Panc1 (cell line): ENCODE measurements at regions of chrX and their contacts with region 1.

Region 1: GRCh38 chrX:41397219-41397618 is 49.9 kb upstream of the NYX start:
- DNase-seq: no peak
- ATAC-seq: no peak
- H3K4me3 ChIP-seq: no peak overlapping the region
- H3K27ac ChIP-seq: no peak overlapping the region
- H3K4me1 ChIP-seq: no peaks in the 10 kb centered on the region
- H3K27me3 ChIP-seq: no peaks in the 10 kb centered on the region
- CTCF ChIP-seq: no peak

Region 2: GRCh38 chrX:41022579-41022978 is 374.6 kb before region 1 on chrX:
- CTCF ChIA-PET with region 1: interaction called, 12 read pairs
- POLR2A ChIA-PET with region 1: no interaction called
- in situ Hi-C with region 1: no loop called
- intact Hi-C with region 1: no loop called
- DNase-seq: no peak
- ATAC-seq: no peak
- H3K4me3 ChIP-seq: no peak overlapping the region
- H3K27ac ChIP-seq: no peak overlapping the region
- H3K4me1 ChIP-seq: no peaks in the 10 kb centered on the region
- H3K27me3 ChIP-seq: no peaks in the 10 kb centered on the region
- CTCF ChIP-seq: no peak

Region 3: DNA sequence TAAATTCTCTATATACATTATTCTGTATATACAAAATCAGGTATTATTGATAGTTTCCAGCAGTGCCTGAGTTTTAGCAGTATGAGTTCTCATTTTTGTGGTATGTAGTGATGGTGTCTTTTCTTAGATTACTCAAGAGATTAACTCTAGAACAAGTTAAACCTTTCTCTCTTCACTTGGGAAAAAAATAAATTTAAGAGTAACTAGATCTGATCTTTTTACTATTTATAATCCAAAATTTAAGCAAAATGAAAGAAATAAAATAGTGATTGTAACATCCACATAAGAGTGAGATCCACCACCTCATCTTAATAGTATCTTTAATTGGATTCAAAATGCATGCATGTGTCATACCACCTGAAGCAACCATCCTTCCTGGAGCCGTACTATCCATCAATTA is 187.4 kb before region 1 on chrX:
- CTCF ChIA-PET with region 1: no interaction called
- POLR2A ChIA-PET with region 1: no interaction called
- in situ Hi-C with region 1: no loop called
- intact Hi-C with region 1: no loop called
- DNase-seq: no peak
- ATAC-seq: no peak
- H3K4me3 ChIP-seq: no peak overlapping the region
- H3K27ac ChIP-seq: no peak overlapping the region
- H3K4me1 ChIP-seq: no peaks in the 10 kb centered on the region
- H3K27me3 ChIP-seq: no peaks in the 10 kb centered on the region
- CTCF ChIP-seq: no peak